GM13977 (cell line): ENCODE measurements at regions of chr7 and their contacts with region 1.

Region 1: GRCh38 chr7:27199849-27200760 is at the start of gene HOXA13:
- DNase-seq: peak; percentile 69
- CTCF ChIP-seq: no peak

Region 2: DNA sequence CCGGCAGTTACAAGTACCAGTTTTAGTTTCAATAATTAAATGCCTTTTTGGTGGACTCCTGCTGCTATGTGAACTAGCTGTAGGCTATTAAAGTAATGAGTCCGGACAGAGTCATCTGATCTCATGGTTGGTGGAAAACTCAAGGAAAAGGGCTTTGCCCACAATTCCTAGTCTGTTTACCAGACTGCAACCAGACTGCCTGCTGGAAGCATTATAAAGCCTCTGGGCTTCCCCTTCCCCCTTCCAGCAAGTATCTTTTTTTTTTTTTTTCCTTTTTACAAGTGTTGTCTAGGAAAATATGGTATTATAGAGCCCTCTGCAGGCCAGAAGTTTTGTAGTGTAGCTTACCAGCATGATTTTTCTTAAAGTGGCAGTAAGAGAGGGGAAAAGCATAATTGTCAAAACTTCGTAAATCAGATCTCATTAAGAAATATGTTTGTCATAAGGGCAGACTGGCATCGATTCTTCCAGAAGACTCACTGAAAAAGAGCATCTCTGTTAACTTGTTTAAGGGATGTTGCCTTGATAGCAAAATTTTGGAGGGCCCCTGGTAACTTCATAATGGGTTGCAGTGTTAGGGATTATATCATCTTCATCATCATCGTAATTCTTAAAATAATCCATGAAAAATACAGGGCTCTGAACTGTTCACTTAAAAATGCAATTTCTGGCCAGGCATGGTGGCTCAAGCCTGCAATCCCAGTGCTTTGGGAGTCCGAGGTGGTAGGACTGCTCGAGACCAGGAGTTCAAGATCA is 721.2 kb after region 1 on chr7:
- in situ Hi-C with region 1: loop called (anchors 10 kb)
- DNase-seq: peak; percentile 39
- CTCF ChIP-seq: peak; percentile 51